ENCODE measurements at regions of chr17 and their contacts with region 1.

Region 1: DNA sequence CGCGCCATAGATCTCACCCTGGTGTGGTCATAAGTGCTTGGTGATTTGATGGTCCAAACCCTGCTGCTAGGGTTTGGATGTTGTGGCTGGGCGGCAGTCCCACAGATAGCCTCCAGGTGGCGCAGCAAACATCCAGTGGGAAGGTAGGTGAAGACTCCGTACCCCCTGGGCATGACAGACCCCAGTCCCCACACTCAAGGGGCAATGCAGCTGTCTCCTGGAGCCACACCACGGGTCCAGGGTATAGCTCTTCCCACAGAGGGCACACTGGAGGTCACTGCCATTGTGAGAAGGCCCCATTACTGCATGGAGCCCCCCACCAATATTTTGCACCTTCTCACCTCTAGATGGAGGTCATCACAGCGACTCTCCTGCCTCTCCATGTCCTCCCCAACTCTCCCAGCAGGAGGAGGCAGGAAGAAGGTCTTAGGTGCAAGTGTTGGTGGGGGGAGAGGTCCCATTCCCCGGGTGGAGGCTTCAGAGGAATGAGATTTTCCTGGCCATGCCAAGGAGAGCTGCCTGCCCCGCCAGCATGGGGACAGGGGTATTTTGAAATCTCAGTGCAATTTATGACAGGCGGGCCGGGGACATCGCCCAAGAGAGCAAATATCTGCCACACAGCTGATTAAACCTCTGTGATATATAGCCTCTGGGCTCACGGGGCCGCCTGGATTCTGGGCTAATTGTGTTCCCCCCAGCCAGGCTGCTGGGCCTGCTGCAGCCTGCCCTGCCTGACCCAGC is 17.1 kb upstream of the C17orf113 start:
- DNase-seq: peak; percentile 85
- H3K4me3 ChIP-seq: peak overlapping the region in 1 of 2 experiments; percentile 4; a peak in 1 of 4 replicates
- H3K27ac ChIP-seq: no peak overlapping the region
- H3K4me1 ChIP-seq: peaks cover 0 to 12% of the 10 kb centered on the region in 2 experiments; a peak in 1 of 4 replicates
- H3K27me3 ChIP-seq: no peaks in the 10 kb centered on the region
- CTCF ChIP-seq: peak; percentile 88
- EP300 ChIP-seq: no peak
- RAD21 ChIP-seq: peak; percentile 63

Region 2: GRCh38 chr17:41966463-41967140 is 100.9 kb before region 1 on chr17 and contains the start of gene CNP:
- CTCF ChIA-PET with region 1: interaction called, 10 read pairs
- POLR2A ChIA-PET with region 1: no interaction called
- DNase-seq: peak; percentile 99
- H3K4me3 ChIP-seq: peak within 1 kb of the TSS; percentile 93 to 96
- H3K27ac ChIP-seq: peak within 1 kb of the TSS; percentile 65 to 91
- H3K4me1 ChIP-seq: peaks cover 5 to 34% of the 10 kb centered on the region in 2 experiments; a peak in 2 of 4 replicates
- H3K27me3 ChIP-seq: no peaks in the 10 kb centered on the region
- CTCF ChIP-seq: no peak
- EP300 ChIP-seq: no peak
- RAD21 ChIP-seq: no peak
- polyA plus RNA-seq, gene CNP: 44.8 and 54.8 TPM in 2 replicates

Region 3: GRCh38 chr17:42002792-42003301 is 64.7 kb before region 1 on chr17:
- CTCF ChIA-PET with region 1: no interaction called
- POLR2A ChIA-PET with region 1: no interaction called
- DNase-seq: no peak
- H3K4me3 ChIP-seq: no peak overlapping the region
- H3K27ac ChIP-seq: peak overlapping the region in 1 of 2 experiments; percentile 9; a peak in 2 of 4 replicates
- H3K4me1 ChIP-seq: peaks cover 6 to 8% of the 10 kb centered on the region in 2 experiments; a peak in 2 of 4 replicates
- H3K27me3 ChIP-seq: no peaks in the 10 kb centered on the region
- CTCF ChIP-seq: no peak
- EP300 ChIP-seq: no peak
- RAD21 ChIP-seq: no peak

Region 4: GRCh38 chr17:42025191-42025579 is 42.3 kb before region 1 on chr17:
- CTCF ChIA-PET with region 1: interaction called, 22 read pairs
- POLR2A ChIA-PET with region 1: no interaction called
- DNase-seq: no peak
- H3K4me3 ChIP-seq: peak overlapping the region in 1 of 2 experiments; percentile 18; a peak in 1 of 4 replicates
- H3K27ac ChIP-seq: peak overlapping the region; percentile 29 to 52
- H3K4me1 ChIP-seq: peaks cover 7 to 11% of the 10 kb centered on the region in 2 experiments; a peak in 2 of 4 replicates
- H3K27me3 ChIP-seq: no peaks in the 10 kb centered on the region
- CTCF ChIP-seq: no peak
- EP300 ChIP-seq: no peak
- RAD21 ChIP-seq: no peak

Region 5: DNA sequence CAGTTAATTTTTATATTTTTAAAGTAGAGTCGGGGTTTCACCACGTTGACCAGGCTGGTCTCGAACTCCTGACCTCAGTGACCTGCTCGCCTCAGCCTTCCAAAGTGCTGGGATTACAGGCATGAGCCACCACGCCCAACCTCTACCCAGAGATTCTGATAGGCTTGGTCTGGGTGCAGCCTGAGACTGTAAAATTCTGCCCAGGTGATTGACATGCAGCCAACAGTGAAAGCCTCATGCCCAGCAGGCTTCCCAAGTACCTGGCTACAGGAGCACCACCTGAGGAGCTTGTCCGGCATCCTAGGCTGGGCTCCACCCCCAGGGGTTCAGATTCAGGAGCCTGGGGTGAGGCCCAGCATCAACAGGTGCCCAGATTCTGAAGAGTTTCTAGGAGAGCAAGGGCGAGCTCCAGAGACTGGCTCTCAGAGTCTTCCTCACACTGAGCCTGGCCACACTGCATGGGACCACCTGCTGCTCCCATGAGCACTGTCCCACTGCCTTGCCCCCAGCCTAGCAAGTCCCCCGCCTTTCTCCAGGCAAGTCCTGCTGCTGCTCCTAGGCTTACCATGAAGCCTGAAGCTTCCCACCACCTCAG is 14.1 kb after region 1 on chr17:
- CTCF ChIA-PET with region 1: interaction called, 15 read pairs
- POLR2A ChIA-PET with region 1: interaction called, 3 read pairs
- DNase-seq: no peak
- H3K4me3 ChIP-seq: no peak overlapping the region
- H3K27ac ChIP-seq: no peak overlapping the region
- H3K4me1 ChIP-seq: no peaks in the 10 kb centered on the region
- H3K27me3 ChIP-seq: no peaks in the 10 kb centered on the region
- CTCF ChIP-seq: no peak
- EP300 ChIP-seq: no peak
- RAD21 ChIP-seq: no peak

Region 6: DNA sequence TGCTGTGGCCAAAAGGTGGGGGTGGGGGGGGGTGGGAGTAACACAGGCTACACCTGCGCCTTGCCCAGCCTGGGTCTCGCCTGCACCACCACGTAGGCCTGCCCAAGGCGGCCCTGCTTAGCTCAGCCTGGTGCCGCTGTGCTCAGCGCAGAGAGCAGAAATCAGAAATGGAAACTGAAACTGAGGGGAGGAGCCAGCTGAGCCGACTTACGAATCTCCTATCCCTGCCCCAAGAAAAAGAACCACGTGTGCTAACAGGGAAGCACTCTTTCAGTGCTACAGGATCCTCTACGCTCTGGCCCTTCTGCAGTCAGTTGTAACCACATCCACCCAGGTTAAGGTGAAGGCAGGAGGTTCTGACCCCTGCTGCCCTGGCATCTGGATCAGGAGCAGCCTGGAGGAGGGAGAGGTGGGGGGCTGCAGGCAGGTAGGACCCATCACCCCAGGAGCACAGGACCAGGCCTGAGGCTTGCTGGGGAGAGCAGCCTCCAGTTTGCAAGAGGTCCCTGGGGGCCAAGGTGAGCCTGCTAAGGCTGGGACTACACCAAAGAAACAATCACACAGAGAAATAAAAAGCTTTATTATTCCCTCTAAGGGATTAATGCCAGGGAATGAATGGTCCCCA is 45.1 kb after region 1 on chr17 and contains the start of gene DHX58:
- CTCF ChIA-PET with region 1: interaction called, 187 read pairs
- POLR2A ChIA-PET with region 1: no interaction called
- DNase-seq: no peak
- H3K4me3 ChIP-seq: no peak within 1 kb of the TSS
- H3K27ac ChIP-seq: no peak within 1 kb of the TSS
- H3K4me1 ChIP-seq: peaks cover 0 to 11% of the 10 kb centered on the region in 2 experiments; a peak in 1 of 4 replicates
- H3K27me3 ChIP-seq: no peaks in the 10 kb centered on the region
- CTCF ChIP-seq: no peak
- EP300 ChIP-seq: no peak
- RAD21 ChIP-seq: no peak
- polyA plus RNA-seq, gene DHX58: 1.2 and 1.6 TPM in 2 replicates